Activated CD4-positive, alpha-beta T cell treated with anti-CD3 and anti-CD28 coated beads, Interleukin-2, amount 10 ng/mL, durations not matched to agents 7 days and 5 days (primary cell): ENCODE measurements at regions of chr7 and their contacts with region 1.

Region 1: GRCh38 chr7:143240291-143241168 is 18.7 kb downstream of the TAS2R40 start:
- DNase-seq: peak; percentile 81
- H3K4me3 Mint-ChIP-seq: no peak overlapping the region
- H3K27ac Mint-ChIP-seq: peak overlapping the region; percentile 58
- H3K4me1 Mint-ChIP-seq: peaks cover 53% of the 10 kb centered on the region
- H3K27me3 Mint-ChIP-seq: peaks cover 15% of the 10 kb centered on the region

Region 2: DNA sequence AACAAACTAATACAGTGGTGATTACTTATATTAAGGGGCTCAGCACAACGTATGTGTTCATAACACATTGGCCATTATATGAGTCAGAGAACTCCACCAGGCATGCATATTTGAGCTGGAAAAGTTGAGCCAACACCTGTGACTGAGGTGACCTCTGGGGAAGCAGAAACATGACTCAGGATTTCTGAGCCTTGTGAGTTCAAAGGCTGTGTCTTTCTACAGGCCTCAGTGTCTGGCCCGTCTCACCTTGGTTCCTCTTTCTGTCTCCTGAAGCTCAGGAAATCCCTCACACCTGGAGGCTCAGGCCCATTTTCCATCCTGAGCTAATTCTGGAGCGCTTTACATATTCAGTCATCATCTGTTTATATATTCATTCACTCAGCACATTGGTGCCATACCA is 1920.2 kb before region 1 on chr7:
- CTCF ChIA-PET with region 1: no interaction called
- POLR2A ChIA-PET with region 1: no interaction called
- DNase-seq: no peak
- H3K4me3 Mint-ChIP-seq: no peak overlapping the region
- H3K27ac Mint-ChIP-seq: no peak overlapping the region
- H3K4me1 Mint-ChIP-seq: no peaks in the 10 kb centered on the region
- H3K27me3 Mint-ChIP-seq: peaks cover 11% of the 10 kb centered on the region

Region 3: DNA sequence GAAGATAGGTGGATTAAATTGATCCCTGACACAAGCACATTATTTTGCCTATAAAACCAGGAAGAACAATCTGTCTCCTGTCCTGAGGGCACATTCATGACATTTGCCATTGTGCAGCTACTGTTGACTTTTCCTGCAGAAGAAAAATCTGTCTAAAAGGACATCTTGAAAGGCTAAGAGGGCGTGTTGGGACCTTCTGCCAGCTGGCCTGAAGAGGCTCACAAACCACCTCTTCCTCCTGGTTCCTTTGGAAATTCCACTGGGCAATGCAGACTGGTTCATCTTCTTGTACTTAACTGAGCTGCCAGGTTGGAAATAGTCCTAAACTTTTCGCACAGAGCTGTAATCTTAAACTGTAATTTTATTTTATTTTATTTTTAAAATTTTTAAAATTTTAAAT is 144.4 kb before region 1 on chr7:
- CTCF ChIA-PET with region 1: no interaction called
- POLR2A ChIA-PET with region 1: no interaction called
- DNase-seq: no peak
- H3K4me3 Mint-ChIP-seq: no peak overlapping the region
- H3K27ac Mint-ChIP-seq: no peak overlapping the region
- H3K4me1 Mint-ChIP-seq: no peaks in the 10 kb centered on the region
- H3K27me3 Mint-ChIP-seq: no peaks in the 10 kb centered on the region

Region 4: GRCh38 chr7:143147072-143147694 is 93.3 kb before region 1 on chr7:
- CTCF ChIA-PET with region 1: no interaction called
- POLR2A ChIA-PET with region 1: no interaction called
- DNase-seq: no peak
- H3K4me3 Mint-ChIP-seq: no peak overlapping the region
- H3K27ac Mint-ChIP-seq: no peak overlapping the region
- H3K4me1 Mint-ChIP-seq: no peaks in the 10 kb centered on the region
- H3K27me3 Mint-ChIP-seq: peaks cover 7% of the 10 kb centered on the region

Region 5: DNA sequence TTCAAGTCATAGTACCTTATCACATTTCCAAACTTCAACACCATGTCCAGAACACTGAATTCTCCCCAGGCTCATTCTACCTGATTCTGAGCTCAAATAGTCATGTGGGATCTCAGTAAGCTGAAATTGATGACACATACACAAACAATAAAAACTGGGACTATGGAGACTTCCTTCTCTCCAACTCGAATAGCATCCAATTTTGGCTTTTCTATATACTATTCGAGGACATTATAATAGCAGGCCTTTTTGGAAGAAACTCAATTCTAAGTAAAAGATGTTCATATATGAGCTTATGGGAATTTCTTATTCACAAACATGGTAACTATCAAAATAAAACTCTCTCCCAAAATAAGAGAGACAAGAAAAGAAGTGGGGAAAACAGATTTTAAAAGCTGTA is 19.2 kb before region 1 on chr7:
- CTCF ChIA-PET with region 1: interaction called, 10 read pairs
- POLR2A ChIA-PET with region 1: no interaction called
- DNase-seq: no peak
- H3K4me3 Mint-ChIP-seq: no peak overlapping the region
- H3K27ac Mint-ChIP-seq: no peak overlapping the region
- H3K4me1 Mint-ChIP-seq: no peaks in the 10 kb centered on the region
- H3K27me3 Mint-ChIP-seq: peaks cover 33% of the 10 kb centered on the region

Region 6: DNA sequence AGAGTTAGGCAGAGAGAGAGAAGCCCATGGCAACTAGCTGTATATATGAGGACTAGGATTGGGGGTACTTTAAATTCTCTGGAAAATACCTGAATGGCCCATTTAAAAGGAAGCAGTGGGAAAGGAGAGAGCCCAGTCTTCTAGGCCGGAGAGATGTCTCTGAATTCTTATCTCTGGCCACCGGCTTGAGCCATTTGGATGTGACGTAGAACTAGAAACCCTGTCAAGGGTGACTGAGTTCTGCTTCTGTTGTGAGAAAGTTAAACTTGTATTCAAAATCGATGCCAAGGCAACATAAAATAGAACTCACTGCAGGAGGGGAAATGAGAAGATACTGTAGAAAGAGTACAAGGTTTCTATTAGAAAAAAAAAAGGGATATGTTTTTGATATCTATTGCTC is 16.4 kb after region 1 on chr7:
- CTCF ChIA-PET with region 1: interaction called, 23 read pairs
- POLR2A ChIA-PET with region 1: interaction called, 3 read pairs
- DNase-seq: no peak
- H3K4me3 Mint-ChIP-seq: no peak overlapping the region
- H3K27ac Mint-ChIP-seq: no peak overlapping the region
- H3K4me1 Mint-ChIP-seq: peaks cover 73% of the 10 kb centered on the region
- H3K27me3 Mint-ChIP-seq: no peaks in the 10 kb centered on the region

Region 7: GRCh38 chr7:143263266-143264195 is 23.0 kb after region 1 on chr7 and contains the start of gene GSTK1:
- CTCF ChIA-PET with region 1: interaction called, 21 read pairs
- POLR2A ChIA-PET with region 1: interaction called, 5 read pairs
- DNase-seq: peak; percentile 83
- H3K4me3 Mint-ChIP-seq: peak within 1 kb of the TSS; percentile 97
- H3K27ac Mint-ChIP-seq: peak within 1 kb of the TSS; percentile 94
- H3K4me1 Mint-ChIP-seq: peaks cover 78% of the 10 kb centered on the region
- H3K27me3 Mint-ChIP-seq: no peaks in the 10 kb centered on the region
- total RNA-seq, gene GSTK1: 370 to 419 TPM

Region 8: GRCh38 chr7:143279186-143280098 is 38.9 kb after region 1 on chr7:
- CTCF ChIA-PET with region 1: interaction called, 10 read pairs
- POLR2A ChIA-PET with region 1: no interaction called
- DNase-seq: peak; percentile 24
- H3K4me3 Mint-ChIP-seq: peak overlapping the region; percentile 39
- H3K27ac Mint-ChIP-seq: peak overlapping the region; percentile 83
- H3K4me1 Mint-ChIP-seq: peaks cover 43% of the 10 kb centered on the region
- H3K27me3 Mint-ChIP-seq: no peaks in the 10 kb centered on the region

Region 9: DNA sequence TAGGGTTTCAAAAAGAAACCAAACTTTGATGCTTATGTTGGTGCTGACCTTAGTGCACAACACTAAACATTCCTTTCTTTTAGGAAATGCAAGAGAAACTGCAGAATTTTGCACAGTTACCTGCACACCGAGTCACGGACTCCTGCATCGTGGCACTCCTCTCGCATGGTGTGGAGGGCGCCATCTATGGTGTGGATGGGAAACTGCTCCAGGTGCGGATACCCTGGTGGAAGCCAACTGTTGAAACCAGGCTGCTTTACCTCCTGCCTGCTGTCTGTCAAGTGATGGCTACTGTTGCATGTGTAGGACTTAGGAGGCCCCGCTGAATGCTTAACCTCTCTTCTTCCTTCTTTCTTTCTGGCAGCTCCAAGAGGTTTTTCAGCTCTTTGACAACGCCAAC is 59.3 kb after region 1 on chr7:
- CTCF ChIA-PET with region 1: interaction called, 32 read pairs
- POLR2A ChIA-PET with region 1: no interaction called
- DNase-seq: peak; percentile 74
- H3K4me3 Mint-ChIP-seq: no peak overlapping the region
- H3K27ac Mint-ChIP-seq: peak overlapping the region; percentile 43
- H3K4me1 Mint-ChIP-seq: peaks cover 67% of the 10 kb centered on the region
- H3K27me3 Mint-ChIP-seq: no peaks in the 10 kb centered on the region

Region 10: DNA sequence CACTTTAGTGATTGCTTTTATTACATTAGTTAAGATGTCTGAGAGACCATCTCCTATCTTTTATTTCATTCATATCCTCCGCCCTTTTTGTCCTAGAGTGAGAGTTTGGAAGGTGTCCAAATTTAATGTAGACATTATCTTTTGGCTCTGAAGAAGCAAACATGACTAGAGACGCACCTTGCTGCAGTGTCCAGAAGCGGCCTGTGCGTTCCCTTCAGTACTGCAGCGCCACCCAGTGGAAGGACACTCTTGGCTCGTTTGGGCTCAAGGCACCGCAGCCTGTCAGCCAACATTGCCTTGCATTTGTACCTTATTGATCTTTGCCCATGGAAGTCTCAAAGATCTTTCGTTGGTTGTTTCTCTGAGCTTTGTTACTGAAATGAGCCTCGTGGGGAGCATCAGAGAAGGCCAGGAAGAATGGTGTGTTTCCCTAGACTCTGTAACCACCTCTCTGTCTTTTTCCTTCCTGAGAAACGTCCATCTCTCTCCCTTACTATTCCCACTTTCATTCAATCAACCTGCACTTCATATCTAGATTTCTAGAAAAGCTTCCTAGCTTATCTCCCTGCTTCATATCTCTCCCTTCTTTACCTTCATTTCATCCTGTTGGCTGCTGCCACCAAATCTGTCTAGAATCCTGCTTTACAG is 65.0 kb after region 1 on chr7:
- CTCF ChIA-PET with region 1: interaction called, 32 read pairs
- POLR2A ChIA-PET with region 1: no interaction called
- DNase-seq: peak; percentile 71
- H3K4me3 Mint-ChIP-seq: no peak overlapping the region
- H3K27ac Mint-ChIP-seq: peak overlapping the region; percentile 21
- H3K4me1 Mint-ChIP-seq: peaks cover 70% of the 10 kb centered on the region
- H3K27me3 Mint-ChIP-seq: no peaks in the 10 kb centered on the region